Aorta (tissue), 5 donors: ENCODE measurements at regions of chr14 and their contacts with region 1.

Region 1: GRCh38 chr14:67599698-67600561 is at the start of gene PIGH:
- DNase-seq: peak; percentile 93 to 97
- ATAC-seq: peak; percentile 98
- H3K4me3 ChIP-seq: peak within 1 kb of the TSS; percentile 77
- H3K27ac ChIP-seq: peak within 1 kb of the TSS; percentile 1 to 92
- H3K4me1 ChIP-seq: no peaks in the 10 kb centered on the region
- H3K27me3 ChIP-seq: peaks cover 0 to 3% of the 10 kb centered on the region in 2 donors
- total RNA-seq, gene PIGH: 17.9 to 18.0 TPM

Region 2: GRCh38 chr14:67446120-67447032 is 153.6 kb before region 1 on chr14:
- intact Hi-C with region 1: no loop called
- DNase-seq: peak in 1 of 2 donors; percentile 42
- ATAC-seq: no peak
- H3K4me3 ChIP-seq: no peak overlapping the region
- H3K27ac ChIP-seq: no peak overlapping the region
- H3K4me1 ChIP-seq: no peaks in the 10 kb centered on the region
- H3K27me3 ChIP-seq: no peaks in the 10 kb centered on the region

Region 3: GRCh38 chr14:67695394-67695949 is 95.5 kb after region 1 on chr14 and contains the start of gene RDH11:
- intact Hi-C with region 1: loop called in 1 of 2 experiments (anchors 5 kb)
- DNase-seq: peak; percentile 91 to 92
- ATAC-seq: peak; percentile 97
- H3K4me3 ChIP-seq: peak within 1 kb of the TSS; percentile 84 to 90
- H3K27ac ChIP-seq: peak within 1 kb of the TSS in 1 of 2 donors; percentile 64
- H3K4me1 ChIP-seq: no peaks in the 10 kb centered on the region
- H3K27me3 ChIP-seq: no peaks in the 10 kb centered on the region
- total RNA-seq, gene RDH11: 34.8 to 38.7 TPM

Region 4: GRCh38 chr14:67900231-67900630 is 300.3 kb after region 1 on chr14:
- intact Hi-C with region 1: no loop called
- DNase-seq: no peak
- ATAC-seq: no peak
- H3K4me3 ChIP-seq: no peak overlapping the region
- H3K27ac ChIP-seq: no peak overlapping the region
- H3K4me1 ChIP-seq: no peaks in the 10 kb centered on the region
- H3K27me3 ChIP-seq: no peaks in the 10 kb centered on the region